Heart left ventricle (tissue), 16 donors: ENCODE measurements at regions of chr15 and their contacts with region 1.

Region 1: DNA sequence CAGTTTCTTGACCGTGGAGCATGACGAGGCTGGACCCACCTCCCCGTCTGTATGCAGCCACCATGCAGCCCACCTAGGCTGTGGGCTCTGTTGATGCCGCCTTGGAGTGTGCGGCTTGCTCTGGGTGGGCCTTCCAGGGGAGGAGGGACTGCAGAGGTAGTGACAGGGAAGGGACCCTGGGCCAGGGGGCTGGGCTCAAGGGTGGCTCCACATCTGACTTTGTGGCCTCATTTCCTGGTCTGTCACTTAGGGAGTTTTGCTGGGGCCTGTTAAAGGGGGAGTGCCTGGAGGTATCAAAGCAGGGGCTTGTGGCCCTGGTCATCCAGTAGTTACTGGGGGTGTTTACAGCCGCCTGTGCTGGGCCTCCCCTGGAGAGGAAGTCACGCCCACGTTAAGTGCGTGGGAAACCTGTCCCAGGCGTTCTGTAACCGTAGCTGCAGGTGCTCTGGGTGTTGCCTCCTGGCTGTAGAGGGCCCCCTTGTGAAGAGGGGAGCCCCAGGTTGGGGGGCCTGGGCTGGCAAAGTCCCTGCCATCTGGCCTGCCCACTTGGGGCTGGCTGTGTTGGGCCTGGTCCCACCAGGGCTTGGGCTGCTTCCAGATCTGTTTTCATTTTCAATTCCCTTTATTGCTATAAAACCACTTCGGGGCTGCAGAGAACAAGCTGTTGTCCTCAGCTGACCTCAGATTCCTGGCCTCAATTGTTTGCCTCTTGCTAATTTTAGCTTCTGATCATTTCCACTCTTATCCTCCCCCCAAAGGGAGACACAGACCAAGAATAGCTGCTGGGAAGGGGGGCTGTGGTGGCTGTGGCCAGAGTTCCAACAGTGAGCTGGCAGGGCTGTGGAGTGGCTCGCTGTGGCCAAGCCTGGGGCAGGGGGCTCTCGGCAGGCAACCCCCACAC is 26.5 kb downstream of the KLF13 start:
- DNase-seq: peak; percentile 75 to 90 (median 88)
- ATAC-seq: peak; percentile 85 to 91 (median 86)
- H3K4me3 ChIP-seq: peak overlapping the region in 10 of 12 donors; percentile 2 to 50 (median 34)
- H3K27ac ChIP-seq: peak overlapping the region; percentile 85 to 99 (median 94)
- H3K4me1 ChIP-seq: peaks cover 47 to 100% (median 100%) of the 10 kb centered on the region in 12 donors
- H3K27me3 ChIP-seq: no peaks in the 10 kb centered on the region
- CTCF ChIP-seq: peak in 1 of 12 donors; percentile 10
- POLR2A ChIP-seq: no peak

Region 2: GRCh38 chr15:31338879-31339557 is 14.1 kb before region 1 on chr15:
- intact Hi-C with region 1: loop called in 1 of 10 experiments (anchors 2 kb)
- DNase-seq: peak; percentile 80 to 86 (median 85)
- ATAC-seq: peak; percentile 33 to 83 (median 68)
- H3K4me3 ChIP-seq: peak overlapping the region in 4 of 12 donors; percentile 0 to 11 (median 6)
- H3K27ac ChIP-seq: peak overlapping the region; percentile 49 to 89 (median 71)
- H3K4me1 ChIP-seq: peaks cover 43 to 100% (median 98%) of the 10 kb centered on the region in 12 donors
- H3K27me3 ChIP-seq: no peaks in the 10 kb centered on the region
- CTCF ChIP-seq: no peak
- POLR2A ChIP-seq: no peak

Region 3: DNA sequence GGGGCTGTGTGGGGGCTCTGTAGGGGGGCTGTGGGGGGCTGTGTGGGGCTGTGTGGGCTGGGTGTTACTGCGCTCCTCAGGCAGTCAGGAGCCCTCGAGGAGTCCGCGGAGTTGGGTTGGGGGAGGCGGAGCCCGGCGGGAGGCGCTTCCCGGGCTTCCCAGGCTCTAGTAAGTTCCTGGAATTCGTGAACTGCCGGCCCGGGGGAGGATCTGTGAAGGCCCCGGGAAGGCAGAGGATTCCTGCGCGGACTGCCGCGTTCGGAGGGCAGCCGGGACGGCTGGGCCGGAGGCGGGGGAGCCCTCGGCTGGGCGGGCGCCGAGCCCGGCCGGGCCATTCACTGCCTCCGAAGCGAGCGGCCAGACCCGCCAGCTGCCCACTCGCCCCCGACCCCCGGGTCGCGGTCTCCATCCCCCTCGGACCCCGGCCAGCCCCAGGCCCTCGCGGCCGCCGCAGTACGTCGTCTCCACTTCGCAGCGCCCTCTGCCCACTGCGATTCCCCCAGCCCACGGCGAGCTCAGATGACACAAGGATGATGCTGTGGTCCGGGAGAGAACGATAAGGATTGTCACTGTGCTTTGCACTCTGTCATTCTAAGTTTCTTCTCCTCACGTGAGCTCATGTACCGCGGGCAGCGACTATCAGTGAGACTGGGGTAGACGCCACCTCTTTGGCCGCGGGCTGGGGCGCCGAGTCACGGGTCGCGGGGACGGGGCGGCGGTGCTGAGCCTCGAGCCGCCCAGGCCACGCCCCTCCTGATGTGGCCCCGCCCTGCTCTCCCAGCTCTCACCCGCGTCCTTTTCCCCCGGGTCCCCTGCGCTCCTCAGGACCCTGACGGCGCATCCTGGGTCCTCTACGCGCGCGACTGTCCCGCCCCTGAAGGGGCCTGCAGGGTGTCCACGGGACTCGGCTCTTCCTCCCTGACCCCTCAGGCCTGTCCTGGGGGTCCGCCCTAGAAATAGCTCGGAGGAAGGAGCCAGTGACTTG is 38.8 kb after region 1 on chr15:
- intact Hi-C with region 1: loop called in 1 of 10 experiments (anchors 5 kb)
- DNase-seq: peak; percentile 81 to 93 (median 90)
- ATAC-seq: peak; percentile 48 to 85 (median 80)
- H3K4me3 ChIP-seq: peak overlapping the region; percentile 57 to 88 (median 75)
- H3K27ac ChIP-seq: peak overlapping the region; percentile 92 to 99 (median 96)
- H3K4me1 ChIP-seq: peaks cover 0 to 33% (median 20%) of the 10 kb centered on the region in 12 donors
- H3K27me3 ChIP-seq: no peaks in the 10 kb centered on the region
- CTCF ChIP-seq: peak in 2 of 12 donors; percentile 9 to 13
- POLR2A ChIP-seq: peak; percentile 32 to 91